ENCODE measurements at regions of chr3 and their contacts with region 1.

Region 1: GRCh38 chr3:50321336-50322114 is 1.0 kb downstream of the HYAL2 start:
- DNase-seq: no peak
- H3K4me3 ChIP-seq: peak overlapping the region; percentile 72 to 97
- H3K27ac ChIP-seq: peak overlapping the region; percentile 90
- H3K4me1 ChIP-seq: peaks cover 59% of the 10 kb centered on the region
- H3K27me3 ChIP-seq: no peaks in the 10 kb centered on the region
- CTCF ChIP-seq: peak in 1 of 3 experiments; percentile 39
- POLR2A ChIP-seq: no peak

Region 2: GRCh38 chr3:50256807-50257535 is 64.6 kb before region 1 on chr3:
- intact Hi-C with region 1: loop called (anchors 5 kb)
- DNase-seq: no peak
- H3K4me3 ChIP-seq: no peak overlapping the region
- H3K27ac ChIP-seq: peak overlapping the region; percentile 98
- H3K4me1 ChIP-seq: peaks cover 65% of the 10 kb centered on the region
- H3K27me3 ChIP-seq: no peaks in the 10 kb centered on the region
- CTCF ChIP-seq: peak in 1 of 3 experiments; percentile 24
- POLR2A ChIP-seq: no peak

Region 3: GRCh38 chr3:50298836-50299637 is 22.5 kb before region 1 on chr3 and contains the starts of genes HYAL3 and NAA80:
- intact Hi-C with region 1: loop called (anchors 2 kb)
- DNase-seq: peak; percentile 100
- H3K4me3 ChIP-seq: peak within 1 kb of the TSS; percentile 61 to 90
- H3K27ac ChIP-seq: peak within 1 kb of the TSS; percentile 91
- H3K4me1 ChIP-seq: peaks cover 55% of the 10 kb centered on the region
- H3K27me3 ChIP-seq: no peaks in the 10 kb centered on the region
- CTCF ChIP-seq: peak in 1 of 3 experiments; percentile 50
- POLR2A ChIP-seq: peak in 1 of 2 donors; percentile 96
- total RNA-seq, gene HYAL3: 8.1 TPM
- total RNA-seq, gene NAA80: 10.1 TPM